ENCODE measurements at regions of chr16 and their contacts with region 1.

Region 1: GRCh38 chr16:2838928-2839327 is 8.8 kb downstream of the ZG16B start:
- DNase-seq: peak; percentile 71 to 82
- H3K4me3 ChIP-seq: no peak overlapping the region
- H3K27ac ChIP-seq: no peak overlapping the region
- H3K4me1 ChIP-seq: peaks cover 0 to 11% (median 3%) of the 10 kb centered on the region in 4 experiments; a peak in 5 of 7 replicates
- H3K27me3 ChIP-seq: peaks cover 0 to 5% (median 2%) of the 10 kb centered on the region in 4 experiments; a peak in 4 of 7 replicates
- CTCF ChIP-seq: peak; percentile 97 to 100 (median 97)
- EP300 ChIP-seq: no peak
- POLR2A ChIP-seq: no peak
- RAD21 ChIP-seq: peak; percentile 92 to 95

Region 2: DNA sequence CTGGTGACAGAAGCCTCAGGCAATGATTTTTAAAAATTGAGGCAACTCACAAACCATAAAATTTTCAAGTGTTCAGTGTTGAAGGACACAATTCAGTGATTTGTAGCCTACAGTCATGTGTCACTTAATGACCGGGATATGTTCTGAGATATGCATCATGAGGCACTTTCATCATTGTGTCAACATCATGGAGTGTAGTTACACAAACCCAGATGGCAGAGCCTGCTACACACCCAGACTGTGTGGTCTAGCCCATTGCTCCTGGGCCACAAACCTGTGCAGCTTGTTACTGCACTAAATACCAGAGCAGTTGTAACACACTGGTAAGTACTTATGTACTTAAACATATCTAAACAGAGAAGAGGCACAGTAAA is 39.1 kb before region 1 on chr16:
- CTCF ChIA-PET with region 1: interaction called, 12 read pairs
- POLR2A ChIA-PET with region 1: no interaction called
- DNase-seq: no peak
- H3K4me3 ChIP-seq: no peak overlapping the region
- H3K27ac ChIP-seq: no peak overlapping the region
- H3K4me1 ChIP-seq: no peaks in the 10 kb centered on the region
- H3K27me3 ChIP-seq: no peaks in the 10 kb centered on the region
- CTCF ChIP-seq: no peak
- EP300 ChIP-seq: no peak
- POLR2A ChIP-seq: no peak
- RAD21 ChIP-seq: no peak

Region 3: GRCh38 chr16:2854700-2855309 is 15.9 kb after region 1 on chr16:
- CTCF ChIA-PET with region 1: interaction called, 74 read pairs
- POLR2A ChIA-PET with region 1: interaction called, 4 read pairs
- DNase-seq: peak in 1 of 2 experiments; percentile 80
- H3K4me3 ChIP-seq: no peak overlapping the region
- H3K27ac ChIP-seq: no peak overlapping the region
- H3K4me1 ChIP-seq: peaks cover 3 to 12% (median 6%) of the 10 kb centered on the region in 4 experiments; a peak in 5 of 7 replicates
- H3K27me3 ChIP-seq: peaks cover 2 to 21% (median 8%) of the 10 kb centered on the region in 4 experiments; a peak in 4 of 7 replicates
- CTCF ChIP-seq: peak; percentile 62 to 74 (median 65)
- EP300 ChIP-seq: no peak
- POLR2A ChIP-seq: no peak
- RAD21 ChIP-seq: peak; percentile 34 to 39

Region 4: DNA sequence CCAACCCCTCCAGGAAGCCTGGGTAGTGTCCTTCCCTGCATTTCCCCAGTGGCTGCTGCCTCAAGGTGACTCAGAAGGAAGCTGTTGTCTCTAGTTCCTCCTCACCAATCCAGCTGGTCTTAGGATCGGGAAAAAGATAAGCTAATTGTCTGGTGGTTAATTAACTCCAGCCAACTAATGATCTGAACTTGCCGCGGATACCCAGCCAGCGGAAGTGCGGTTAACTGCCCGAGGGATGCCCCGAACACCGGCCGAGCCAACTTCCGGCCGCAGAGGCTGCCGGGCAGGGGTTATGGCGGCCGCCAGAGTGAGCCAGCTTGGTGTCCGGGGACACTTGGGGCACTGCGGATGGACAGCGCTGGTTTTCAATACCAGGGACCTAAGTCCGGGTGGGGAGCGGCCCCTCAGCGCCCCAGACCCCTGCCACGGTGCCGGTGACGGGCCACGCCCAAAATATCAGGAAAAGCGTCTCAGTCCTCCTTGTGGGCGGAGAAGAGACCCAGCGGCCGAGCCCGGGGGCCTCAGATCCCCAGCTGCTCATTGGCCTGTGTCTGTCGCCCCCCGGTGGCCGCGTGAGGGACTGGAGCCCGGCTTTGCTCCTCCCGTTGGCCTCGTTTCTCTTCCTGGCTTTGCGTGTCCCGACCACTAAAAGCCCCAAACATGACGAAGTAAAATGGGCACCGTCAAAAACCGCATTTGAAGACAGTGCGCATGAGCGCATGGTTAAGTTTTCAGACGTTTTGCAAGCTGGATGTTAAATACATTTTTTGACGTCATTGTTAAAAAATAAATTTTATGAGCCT is 29.3 kb after region 1 on chr16:
- CTCF ChIA-PET with region 1: interaction called, 90 read pairs
- POLR2A ChIA-PET with region 1: interaction called, 6 read pairs
- DNase-seq: peak; percentile 83 to 99
- H3K4me3 ChIP-seq: peak overlapping the region; percentile 29 to 61 (median 57)
- H3K27ac ChIP-seq: peak overlapping the region; percentile 58; the same call in 1 of the 2 replicates
- H3K4me1 ChIP-seq: no peaks in the 10 kb centered on the region
- H3K27me3 ChIP-seq: peaks cover 7 to 40% (median 32%) of the 10 kb centered on the region in 4 experiments
- CTCF ChIP-seq: peak; percentile 89 to 98 (median 94)
- EP300 ChIP-seq: no peak
- POLR2A ChIP-seq: peak in 1 of 2 experiments; percentile 83; a peak in 2 of 3 replicates
- RAD21 ChIP-seq: peak; percentile 91 to 94

Region 5: GRCh38 chr16:2895815-2896214 is 56.9 kb after region 1 on chr16:
- CTCF ChIA-PET with region 1: interaction called, 19 read pairs
- POLR2A ChIA-PET with region 1: no interaction called
- DNase-seq: no peak
- H3K4me3 ChIP-seq: no peak overlapping the region
- H3K27ac ChIP-seq: no peak overlapping the region
- H3K4me1 ChIP-seq: peaks cover 0 to 3% (median 0%) of the 10 kb centered on the region in 4 experiments; a peak in 2 of 7 replicates
- H3K27me3 ChIP-seq: no peaks in the 10 kb centered on the region
- CTCF ChIP-seq: no peak
- EP300 ChIP-seq: no peak
- POLR2A ChIP-seq: no peak
- RAD21 ChIP-seq: no peak

Region 6: GRCh38 chr16:2919511-2920255 is 80.8 kb after region 1 on chr16:
- CTCF ChIA-PET with region 1: interaction called, 50 read pairs
- POLR2A ChIA-PET with region 1: interaction called, 3 read pairs
- DNase-seq: peak in 1 of 2 experiments; percentile 83
- H3K4me3 ChIP-seq: no peak overlapping the region
- H3K27ac ChIP-seq: no peak overlapping the region
- H3K4me1 ChIP-seq: peaks cover 0 to 2% (median under 1%) of the 10 kb centered on the region in 4 experiments; a peak in 3 of 7 replicates
- H3K27me3 ChIP-seq: no peaks in the 10 kb centered on the region
- CTCF ChIP-seq: peak; percentile 55 to 85 (median 76)
- EP300 ChIP-seq: no peak
- POLR2A ChIP-seq: no peak
- RAD21 ChIP-seq: peak; percentile 83 to 84